Head of caudate nucleus (tissue), 42 donors: ENCODE measurements at regions of chr2 and their contacts with region 1.

Region 1: DNA sequence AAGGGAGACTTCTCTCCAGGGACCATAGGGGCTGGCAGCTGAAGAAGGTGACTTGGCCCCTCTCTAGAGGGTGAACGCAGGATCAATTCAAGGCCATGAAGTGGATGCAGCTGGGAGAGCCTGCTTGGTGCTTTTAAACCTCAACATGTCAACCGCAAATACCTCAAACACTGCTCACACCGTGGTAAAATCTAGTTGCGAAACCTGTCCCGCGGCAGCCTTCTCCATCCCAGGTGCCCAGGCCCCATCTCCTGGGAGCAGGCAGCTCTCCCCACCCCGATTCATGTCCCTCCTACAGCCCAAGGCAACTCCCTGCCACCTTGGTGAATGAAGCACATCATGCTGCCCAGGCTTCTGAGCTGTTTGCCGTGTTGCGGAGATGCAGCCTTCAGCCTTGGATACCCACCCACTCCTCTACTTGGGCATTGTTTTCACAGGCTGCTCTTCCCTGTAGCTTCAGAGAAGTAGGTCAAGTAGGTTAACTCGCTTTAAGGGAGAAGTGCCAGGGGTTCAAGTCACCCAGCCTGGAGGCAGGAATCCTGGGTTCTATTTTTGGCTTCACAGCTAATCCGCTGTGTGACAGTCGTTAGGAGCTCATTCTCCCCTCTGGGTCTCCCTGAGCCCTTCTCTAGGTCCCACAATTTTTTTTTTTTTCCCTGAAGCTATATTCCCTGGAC is 6.2 kb upstream of the EFR3B start:
- DNase-seq: no peak

Region 2: DNA sequence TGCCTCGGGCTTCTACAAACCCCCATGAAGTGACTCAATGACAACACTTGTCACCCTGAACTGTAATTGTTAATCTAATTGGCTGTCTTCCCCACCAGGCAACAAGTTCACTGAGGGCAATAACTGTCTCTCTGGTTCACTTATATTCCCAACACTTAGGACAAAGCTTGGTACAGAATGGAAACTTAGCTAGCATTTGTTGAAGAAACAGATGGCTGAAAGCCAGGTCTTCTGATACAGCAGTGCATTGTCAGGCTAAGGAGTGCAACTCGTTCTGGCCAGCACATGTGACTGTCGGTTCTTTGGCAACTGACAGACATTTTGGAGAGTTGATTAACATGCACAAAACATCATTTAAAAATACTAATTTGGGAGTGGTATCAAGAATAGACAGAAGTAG is 49.3 kb before region 1 on chr2:
- intact Hi-C with region 1: loop called (anchors 2 kb)
- DNase-seq: peak in 40 of 42 donors; percentile 18 to 88 (median 68)

Region 3: DNA sequence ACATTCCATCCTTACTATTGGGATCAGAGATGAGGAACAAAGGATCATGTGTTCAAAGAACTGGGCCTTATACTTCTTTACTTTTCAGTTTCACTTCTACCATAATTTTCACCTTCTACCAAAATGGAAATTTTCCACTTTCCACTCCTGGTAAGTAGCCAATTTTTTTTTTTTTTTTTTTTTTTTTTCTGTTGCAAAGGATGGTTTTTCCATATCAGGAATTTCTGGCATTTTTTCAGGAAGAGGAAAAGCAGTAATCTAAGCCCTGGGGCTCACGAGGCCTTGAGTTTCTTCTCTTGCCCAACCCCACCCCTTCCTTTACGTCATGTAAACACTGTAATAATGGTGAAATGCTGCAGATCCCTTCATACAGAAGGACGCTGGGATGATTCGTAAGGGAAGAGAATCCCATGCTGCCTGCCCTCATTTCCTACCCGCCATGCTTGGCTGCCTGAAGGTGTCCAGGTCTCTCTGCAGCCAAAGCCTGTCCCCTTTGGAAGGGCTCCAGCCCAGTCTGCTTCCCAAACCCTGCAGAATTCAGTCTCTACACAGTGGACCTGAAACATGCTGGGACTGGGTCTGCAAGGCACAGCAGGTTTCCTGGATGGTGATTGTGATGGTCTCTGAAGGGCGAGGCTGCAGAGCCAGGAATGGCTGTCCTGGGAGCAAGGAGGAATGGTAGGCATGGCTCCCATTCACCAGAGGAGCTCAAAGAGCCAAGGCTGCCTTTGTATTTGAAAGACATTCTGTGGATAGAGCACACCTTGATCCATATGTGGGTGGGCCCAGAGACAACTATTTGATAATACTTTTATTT is 63.2 kb after region 1 on chr2:
- intact Hi-C with region 1: no loop called
- DNase-seq: peak in 1 of 42 donors; percentile 31